ENCODE measurements at regions of chr1 and their contacts with region 1.

Region 1: GRCh38 chr1:202192770-202193613 is 607 bp upstream of the LGR6 start:
- DNase-seq: peak; percentile 30 to 75 (median 62)
- ATAC-seq: peak; percentile 44
- H3K4me3 ChIP-seq: peak overlapping the region in 1 of 2 experiments; percentile 20
- H3K4me3 Mint-ChIP-seq: no peak overlapping the region
- H3K27ac ChIP-seq: no peak overlapping the region
- H3K27ac Mint-ChIP-seq: no peak overlapping the region
- H3K4me1 ChIP-seq: peaks cover 7% of the 10 kb centered on the region
- H3K4me1 Mint-ChIP-seq: peaks cover 15% of the 10 kb centered on the region
- H3K27me3 ChIP-seq: peaks cover 0 to 8% of the 10 kb centered on the region in 2 experiments
- H3K27me3 Mint-ChIP-seq: peaks cover 14% of the 10 kb centered on the region
- CTCF ChIP-seq: peak; percentile 83

Region 2: DNA sequence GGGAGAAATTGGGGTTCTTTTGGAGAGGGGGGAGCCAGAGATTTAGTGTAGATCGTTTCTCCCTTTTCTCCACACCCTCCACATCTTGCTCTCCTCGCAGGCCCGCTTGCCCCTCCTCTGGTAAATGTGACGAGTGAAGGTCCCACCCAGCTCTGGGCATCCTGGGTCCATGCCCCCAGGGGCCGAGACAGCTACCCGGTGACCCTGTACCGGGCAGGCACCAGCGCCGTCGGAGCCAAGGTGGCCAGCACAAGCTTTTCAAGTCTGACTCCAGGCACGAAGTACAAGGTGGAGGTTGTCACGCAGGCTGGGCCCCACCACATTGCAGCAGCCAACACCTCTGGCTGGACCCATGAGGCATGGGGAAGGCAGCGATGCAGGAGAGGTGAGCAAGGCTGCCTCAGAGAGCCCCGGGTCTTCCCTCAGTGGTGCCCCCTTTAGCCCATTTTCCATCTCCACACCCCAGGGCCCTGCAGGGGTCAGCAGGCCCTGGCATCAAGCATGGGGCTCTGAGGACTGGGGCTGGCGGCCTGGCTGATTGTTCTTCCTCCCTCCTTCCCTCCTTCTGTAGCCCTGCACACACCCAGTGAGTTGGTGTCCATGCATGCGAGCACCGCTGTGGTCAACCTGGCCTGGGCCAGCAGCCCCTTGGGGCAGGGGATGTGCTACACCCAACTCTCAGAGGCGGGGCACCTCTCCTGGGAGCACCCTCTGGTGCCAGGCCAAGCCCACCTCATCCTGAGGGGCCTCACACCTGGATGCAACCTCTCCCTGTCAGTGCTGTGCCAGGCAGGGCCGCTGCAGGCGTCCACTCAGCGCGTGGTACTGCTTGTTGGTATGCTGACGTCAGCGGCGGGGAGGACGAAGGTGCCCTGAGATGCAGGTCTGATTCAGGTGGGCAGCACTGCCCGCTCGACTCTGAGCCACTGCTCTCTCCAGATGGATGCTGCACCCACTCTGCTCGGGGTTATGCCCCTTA is 15.8 kb before region 1 on chr1:
- CTCF ChIA-PET with region 1: interaction called, 19 read pairs
- POLR2A ChIA-PET with region 1: no interaction called
- intact Hi-C with region 1: no loop called
- DNase-seq: no peak
- ATAC-seq: no peak
- H3K4me3 ChIP-seq: no peak overlapping the region
- H3K4me3 Mint-ChIP-seq: no peak overlapping the region
- H3K27ac ChIP-seq: no peak overlapping the region
- H3K27ac Mint-ChIP-seq: no peak overlapping the region
- H3K4me1 ChIP-seq: no peaks in the 10 kb centered on the region
- H3K4me1 Mint-ChIP-seq: no peaks in the 10 kb centered on the region
- H3K27me3 ChIP-seq: no peaks in the 10 kb centered on the region
- H3K27me3 Mint-ChIP-seq: no peaks in the 10 kb centered on the region
- CTCF ChIP-seq: no peak

Region 3: GRCh38 chr1:202274611-202275010 is 81.6 kb after region 1 on chr1:
- CTCF ChIA-PET with region 1: interaction called, 12 read pairs
- POLR2A ChIA-PET with region 1: no interaction called
- intact Hi-C with region 1: no loop called
- DNase-seq: peak in 8 of 9 experiments; percentile 30 to 69 (median 51)
- ATAC-seq: no peak
- H3K4me3 ChIP-seq: no peak overlapping the region
- H3K4me3 Mint-ChIP-seq: no peak overlapping the region
- H3K27ac ChIP-seq: no peak overlapping the region
- H3K27ac Mint-ChIP-seq: no peak overlapping the region
- H3K4me1 ChIP-seq: no peaks in the 10 kb centered on the region
- H3K4me1 Mint-ChIP-seq: no peaks in the 10 kb centered on the region
- H3K27me3 ChIP-seq: no peaks in the 10 kb centered on the region
- H3K27me3 Mint-ChIP-seq: peaks cover 5% of the 10 kb centered on the region
- CTCF ChIP-seq: no peak

Region 4: GRCh38 chr1:202283379-202283844 is 90.4 kb after region 1 on chr1:
- CTCF ChIA-PET with region 1: interaction called, 10 read pairs
- POLR2A ChIA-PET with region 1: no interaction called
- intact Hi-C with region 1: no loop called
- DNase-seq: peak in 4 of 9 experiments; percentile 17 to 55 (median 36)
- ATAC-seq: peak; percentile 48
- H3K4me3 ChIP-seq: no peak overlapping the region
- H3K4me3 Mint-ChIP-seq: no peak overlapping the region
- H3K27ac ChIP-seq: no peak overlapping the region
- H3K27ac Mint-ChIP-seq: peak overlapping the region; percentile 7
- H3K4me1 ChIP-seq: peaks cover 15% of the 10 kb centered on the region
- H3K4me1 Mint-ChIP-seq: peaks cover 18% of the 10 kb centered on the region
- H3K27me3 ChIP-seq: no peaks in the 10 kb centered on the region
- H3K27me3 Mint-ChIP-seq: no peaks in the 10 kb centered on the region
- CTCF ChIP-seq: no peak

Region 5: DNA sequence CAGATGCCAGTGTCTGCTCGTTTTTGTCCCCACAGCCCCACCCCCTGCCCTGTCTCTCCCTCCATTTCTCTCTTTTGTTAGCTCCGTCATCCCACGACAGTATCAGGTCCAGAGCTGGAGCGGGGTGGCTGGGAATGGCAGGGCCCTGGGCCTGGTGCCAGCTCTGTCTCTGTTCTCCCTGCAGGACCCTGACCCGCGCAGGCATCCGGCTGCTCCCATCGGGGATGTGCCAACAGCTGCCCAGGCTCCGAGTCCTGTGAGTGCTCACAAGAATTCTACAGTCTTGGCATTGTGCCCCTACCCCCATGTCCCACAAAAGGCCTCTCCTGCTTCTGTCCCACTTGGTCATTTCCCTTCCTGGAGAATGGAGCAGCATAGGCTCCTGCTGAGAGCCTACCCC is 111.4 kb after region 1 on chr1:
- CTCF ChIA-PET with region 1: interaction called, 17 read pairs
- POLR2A ChIA-PET with region 1: no interaction called
- intact Hi-C with region 1: no loop called
- DNase-seq: no peak
- ATAC-seq: no peak
- H3K4me3 ChIP-seq: no peak overlapping the region
- H3K4me3 Mint-ChIP-seq: no peak overlapping the region
- H3K27ac ChIP-seq: no peak overlapping the region
- H3K27ac Mint-ChIP-seq: no peak overlapping the region
- H3K4me1 ChIP-seq: no peaks in the 10 kb centered on the region
- H3K4me1 Mint-ChIP-seq: no peaks in the 10 kb centered on the region
- H3K27me3 ChIP-seq: no peaks in the 10 kb centered on the region
- H3K27me3 Mint-ChIP-seq: no peaks in the 10 kb centered on the region
- CTCF ChIP-seq: no peak

Region 6: DNA sequence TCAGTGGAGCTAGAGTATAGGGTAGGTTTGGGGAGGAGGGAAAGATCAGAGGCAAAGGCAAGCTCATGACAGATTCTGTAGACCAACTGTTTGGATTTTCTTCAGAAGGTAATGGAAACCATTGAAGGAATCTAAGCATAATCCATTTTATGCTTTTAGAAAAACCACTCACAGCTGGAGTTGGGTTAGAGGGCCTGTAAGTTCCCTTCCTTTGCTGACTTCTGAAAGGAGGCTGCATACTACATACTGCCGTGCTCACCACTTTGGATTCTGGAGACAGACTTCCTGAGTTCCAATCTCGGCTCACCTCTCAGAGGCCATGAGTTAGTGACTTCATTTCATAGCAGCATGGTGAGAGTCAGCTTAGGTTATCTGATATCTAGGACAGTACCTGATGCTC is 523.7 kb after region 1 on chr1:
- CTCF ChIA-PET with region 1: interaction called, 29 read pairs
- POLR2A ChIA-PET with region 1: no interaction called
- intact Hi-C with region 1: loop called (anchors 1 kb)
- DNase-seq: no peak
- ATAC-seq: no peak
- H3K4me3 ChIP-seq: no peak overlapping the region
- H3K4me3 Mint-ChIP-seq: no peak overlapping the region
- H3K27ac ChIP-seq: no peak overlapping the region
- H3K27ac Mint-ChIP-seq: no peak overlapping the region
- H3K4me1 ChIP-seq: no peaks in the 10 kb centered on the region
- H3K4me1 Mint-ChIP-seq: peaks cover 3% of the 10 kb centered on the region
- H3K27me3 ChIP-seq: no peaks in the 10 kb centered on the region
- H3K27me3 Mint-ChIP-seq: peaks cover 22% of the 10 kb centered on the region
- CTCF ChIP-seq: no peak